GM10248 (cell line): ENCODE measurements at regions of chr9 and their contacts with region 1.

Region 1: DNA sequence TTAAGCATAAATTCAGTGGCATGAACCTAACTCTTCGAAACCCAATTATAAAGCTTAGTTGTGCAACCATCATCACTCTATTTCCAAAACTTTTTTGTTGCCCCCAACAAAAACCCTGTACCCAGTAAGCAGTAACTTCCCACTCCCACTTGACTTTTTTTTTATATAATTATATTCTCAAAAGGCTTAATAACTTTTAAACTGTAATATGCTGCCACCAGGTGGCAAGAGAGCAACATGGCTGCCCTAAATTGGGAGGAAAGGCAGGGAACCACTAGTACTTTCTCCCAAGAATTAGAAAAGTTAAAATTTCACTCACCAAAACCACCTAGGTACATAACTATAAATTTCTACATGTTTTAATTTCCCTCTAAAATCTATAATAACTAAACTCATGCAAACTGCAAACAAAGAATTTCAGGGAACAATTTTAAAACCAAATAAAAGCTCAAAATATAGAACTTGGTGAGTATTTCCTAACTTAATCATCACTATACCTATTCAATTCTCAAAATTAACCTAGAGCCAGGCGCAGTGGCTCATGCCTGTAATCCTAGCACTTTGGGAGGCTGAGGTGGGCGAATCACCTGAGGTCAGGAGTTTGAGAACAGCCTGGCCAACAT is 50.2 kb upstream of the RNF38 start:
- DNase-seq: peak; percentile 28
- CTCF ChIP-seq: peak; percentile 58

Region 2: GRCh38 chr9:35636135-35636876 is 813.9 kb before region 1 on chr9:
- CTCF ChIA-PET with region 1: no interaction called
- POLR2A ChIA-PET with region 1: no interaction called
- DNase-seq: no peak
- CTCF ChIP-seq: no peak

Region 3: DNA sequence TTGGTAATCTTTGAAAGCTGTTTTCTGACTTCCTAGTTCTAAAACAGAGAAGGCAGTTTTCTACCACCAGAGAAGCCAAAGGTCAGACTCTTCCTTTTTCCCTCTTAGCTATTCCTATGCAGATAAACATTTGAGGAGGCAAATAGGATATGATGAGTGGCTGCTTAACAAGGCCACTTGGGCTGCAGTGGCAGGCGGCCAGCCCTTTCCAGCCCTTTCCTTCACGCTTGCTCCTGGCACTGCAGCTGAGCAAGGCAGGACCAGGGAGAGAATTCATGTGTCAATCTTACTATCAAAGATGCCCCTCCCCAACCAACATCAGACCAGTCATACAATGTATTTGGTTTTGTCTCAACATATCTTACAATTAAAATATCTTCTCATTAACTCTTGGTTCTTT is 13.3 kb before region 1 on chr9:
- CTCF ChIA-PET with region 1: interaction called, 16 read pairs
- POLR2A ChIA-PET with region 1: interaction called, 7 read pairs
- DNase-seq: no peak
- CTCF ChIP-seq: no peak

Region 4: GRCh38 chr9:36461323-36461722 is 11.1 kb after region 1 on chr9:
- CTCF ChIA-PET with region 1: interaction called, 10 read pairs
- POLR2A ChIA-PET with region 1: no interaction called
- DNase-seq: no peak
- CTCF ChIP-seq: no peak